ENCODE measurements at regions of chrX and their contacts with region 1.

Region 1: GRCh38 chrX:22135994-22136684 is 104.0 kb downstream of the PHEX start:
- DNase-seq: no peak
- ATAC-seq: peak in 2 of 4 donors; percentile 26 to 37
- H3K4me3 ChIP-seq: no peak overlapping the region
- H3K27ac ChIP-seq: peak overlapping the region in 3 of 12 donors; percentile 21 to 44 (median 25)
- H3K4me1 ChIP-seq: peaks cover 0 to 10% (median 0%) of the 10 kb centered on the region in 12 donors
- H3K27me3 ChIP-seq: peaks cover 0 to 17% (median 0%) of the 10 kb centered on the region in 9 donors
- CTCF ChIP-seq: peak; percentile 44 to 82 (median 64)
- POLR2A ChIP-seq: no peak

Region 2: DNA sequence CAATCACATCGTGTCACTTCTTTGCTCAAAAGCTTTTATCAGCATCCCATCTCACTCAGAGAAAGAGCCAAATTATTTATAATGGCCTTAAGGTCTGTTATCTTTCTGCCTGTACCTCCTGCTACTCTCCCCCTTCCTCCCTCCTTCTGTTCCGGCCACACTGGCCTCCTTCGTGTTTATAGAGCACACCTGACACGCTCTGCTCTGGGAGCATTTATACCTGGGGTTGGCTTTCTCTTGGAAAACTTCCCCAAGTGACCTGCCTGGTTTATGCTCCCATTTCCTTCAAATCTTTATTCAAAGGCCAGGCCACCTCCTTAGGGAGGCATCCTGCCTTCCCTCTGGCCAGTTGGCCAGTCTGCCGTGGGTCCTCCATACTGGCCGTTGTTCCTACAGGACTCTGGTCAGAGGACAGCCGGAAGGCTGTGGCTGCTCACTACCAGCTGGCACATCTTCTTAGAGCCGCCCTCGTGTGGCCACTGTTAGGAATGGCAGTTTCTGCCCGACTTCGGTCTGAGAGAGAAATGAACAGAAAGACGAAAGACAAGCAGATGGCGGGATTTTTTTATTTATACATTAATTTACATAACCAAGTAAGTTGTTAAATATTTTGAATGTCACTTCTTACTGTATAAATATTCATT is 56.4 kb after region 1 on chrX:
- intact Hi-C with region 1: loop called in 5 of 10 experiments (anchors 5 kb)
- DNase-seq: peak; percentile 37 to 67 (median 56)
- ATAC-seq: peak in 3 of 4 donors; percentile 53 to 81 (median 80)
- H3K4me3 ChIP-seq: no peak overlapping the region
- H3K27ac ChIP-seq: no peak overlapping the region
- H3K4me1 ChIP-seq: peaks cover 0 to 4% (median 0%) of the 10 kb centered on the region in 12 donors
- H3K27me3 ChIP-seq: peaks cover 0 to 8% (median 0%) of the 10 kb centered on the region in 9 donors
- CTCF ChIP-seq: peak; percentile 48 to 84 (median 66)
- POLR2A ChIP-seq: no peak

Region 3: GRCh38 chrX:22748093-22748999 is 612.2 kb after region 1 on chrX:
- intact Hi-C with region 1: loop called in 7 of 10 experiments (anchors 2 to 10 kb)
- DNase-seq: peak in 3 of 5 donors; percentile 10 to 26 (median 24)
- ATAC-seq: peak; percentile 61 to 90 (median 84)
- H3K4me3 ChIP-seq: no peak overlapping the region
- H3K27ac ChIP-seq: no peak overlapping the region
- H3K4me1 ChIP-seq: no peaks in the 10 kb centered on the region
- H3K27me3 ChIP-seq: peaks cover 0 to 5% (median 0%) of the 10 kb centered on the region in 9 donors
- CTCF ChIP-seq: peak; percentile 34 to 79 (median 60)
- POLR2A ChIP-seq: no peak

Region 4: DNA sequence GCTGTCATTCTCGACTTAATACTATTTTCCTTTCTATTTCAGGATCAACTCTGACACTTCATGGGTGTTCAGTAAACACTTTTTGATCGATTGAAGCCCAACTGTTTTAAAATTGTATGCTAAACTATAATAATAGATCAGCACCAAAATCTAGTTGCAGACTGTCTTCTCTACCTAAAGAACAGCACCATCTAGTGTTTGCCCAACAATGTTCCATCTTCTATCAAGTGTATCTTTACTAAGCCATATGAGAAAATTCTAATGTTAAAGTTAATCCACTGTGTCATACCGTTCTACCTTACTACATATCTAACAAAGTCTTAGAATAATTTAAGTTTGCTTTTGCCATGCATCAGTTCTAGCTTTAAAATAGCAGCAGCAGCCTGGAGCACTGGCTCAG is 1418.2 kb after region 1 on chrX:
- intact Hi-C with region 1: loop called in 2 of 10 experiments (anchors 5 to 10 kb)
- DNase-seq: no peak
- ATAC-seq: no peak
- H3K4me3 ChIP-seq: no peak overlapping the region
- H3K27ac ChIP-seq: no peak overlapping the region
- H3K4me1 ChIP-seq: no peaks in the 10 kb centered on the region
- H3K27me3 ChIP-seq: peaks cover 0 to 13% (median 0%) of the 10 kb centered on the region in 9 donors
- CTCF ChIP-seq: peak in 11 of 12 donors; percentile 25 to 56 (median 45)
- POLR2A ChIP-seq: no peak

Measured in heart left ventricle (tissue), 16 donors.